Activated naive CD4-positive, alpha-beta T cell treated with anti-CD3 and anti-CD28 coated beads for 36 hours (primary cell): ENCODE measurements at regions of chr6 and their contacts with region 1.

Region 1: GRCh38 chr6:150238336-150238741 is 95.5 kb downstream of the PPP1R14C start:
- DNase-seq: no peak
- H3K4me3 Mint-ChIP-seq: no peak overlapping the region
- H3K27ac Mint-ChIP-seq: no peak overlapping the region
- H3K4me1 Mint-ChIP-seq: peaks cover 9% of the 10 kb centered on the region
- H3K27me3 Mint-ChIP-seq: peaks cover 35% of the 10 kb centered on the region

Region 2: GRCh38 chr6:150256618-150257272 is 18.4 kb after region 1 on chr6:
- CTCF ChIA-PET with region 1: interaction called, 3 read pairs
- intact Hi-C with region 1: loop called (anchors 1 kb)
- DNase-seq: no peak
- H3K4me3 Mint-ChIP-seq: no peak overlapping the region
- H3K27ac Mint-ChIP-seq: no peak overlapping the region
- H3K4me1 Mint-ChIP-seq: peaks cover 9% of the 10 kb centered on the region
- H3K27me3 Mint-ChIP-seq: peaks cover 20% of the 10 kb centered on the region

Region 3: GRCh38 chr6:150301846-150302519 is 63.6 kb after region 1 on chr6:
- CTCF ChIA-PET with region 1: no interaction called
- intact Hi-C with region 1: loop called (anchors 2 kb)
- DNase-seq: peak; percentile 37
- H3K4me3 Mint-ChIP-seq: no peak overlapping the region
- H3K27ac Mint-ChIP-seq: no peak overlapping the region
- H3K4me1 Mint-ChIP-seq: peaks cover 3% of the 10 kb centered on the region
- H3K27me3 Mint-ChIP-seq: peaks cover 17% of the 10 kb centered on the region